ENCODE measurements at regions of chr12 and their contacts with region 1.

Region 1: GRCh38 chr12:120200364-120200800 is 529 bp downstream of the RPLP0 start:
- DNase-seq: peak in 1 of 5 donors; percentile 19
- H3K4me3 ChIP-seq: peak overlapping the region; percentile 80 to 91
- H3K4me3 Mint-ChIP-seq: peak overlapping the region; percentile 93 to 99 (median 98)
- H3K27ac ChIP-seq: peak overlapping the region; percentile 84
- H3K27ac Mint-ChIP-seq: peak overlapping the region; percentile 93 to 99 (median 98)
- H3K4me1 ChIP-seq: peaks cover 42% of the 10 kb centered on the region
- H3K4me1 Mint-ChIP-seq: peaks cover 23 to 60% (median 36%) of the 10 kb centered on the region in 4 donors
- H3K27me3 ChIP-seq: no peaks in the 10 kb centered on the region
- H3K27me3 Mint-ChIP-seq: no peaks in the 10 kb centered on the region

Region 2: DNA sequence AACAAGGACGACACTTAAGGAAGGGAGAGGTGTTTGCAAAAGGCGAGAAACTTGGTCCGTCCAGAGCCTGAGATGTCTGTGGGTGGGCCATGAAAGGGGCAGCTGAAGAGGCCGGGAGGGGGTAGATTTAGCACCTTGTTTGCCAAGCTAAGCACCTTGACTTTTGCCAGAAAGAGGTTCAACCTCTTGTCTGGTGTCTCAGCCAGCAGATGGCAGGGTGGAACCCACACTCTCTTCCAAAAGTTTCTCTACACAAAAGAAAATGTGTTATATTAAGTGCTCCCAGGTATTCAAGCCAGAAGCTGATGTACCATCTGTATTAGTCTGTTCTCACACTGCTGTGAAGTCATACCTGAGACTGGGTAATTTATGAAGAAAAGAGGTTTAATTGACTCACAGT is 1754.1 kb before region 1 on chr12:
- CTCF ChIA-PET with region 1: no interaction called
- POLR2A ChIA-PET with region 1: no interaction called
- intact Hi-C with region 1: no loop called
- DNase-seq: no peak
- H3K4me3 ChIP-seq: no peak overlapping the region
- H3K4me3 Mint-ChIP-seq: no peak overlapping the region
- H3K27ac ChIP-seq: no peak overlapping the region
- H3K27ac Mint-ChIP-seq: no peak overlapping the region
- H3K4me1 ChIP-seq: no peaks in the 10 kb centered on the region
- H3K4me1 Mint-ChIP-seq: no peaks in the 10 kb centered on the region
- H3K27me3 ChIP-seq: no peaks in the 10 kb centered on the region
- H3K27me3 Mint-ChIP-seq: peaks cover 18 to 20% of the 10 kb centered on the region in 2 donors

Region 3: GRCh38 chr12:120220838-120221575 is 20.6 kb after region 1 on chr12:
- CTCF ChIA-PET with region 1: interaction called, 82 read pairs
- POLR2A ChIA-PET with region 1: interaction called, 114 read pairs
- intact Hi-C with region 1: no loop called
- DNase-seq: no peak
- H3K4me3 ChIP-seq: no peak overlapping the region
- H3K4me3 Mint-ChIP-seq: no peak overlapping the region
- H3K27ac ChIP-seq: no peak overlapping the region
- H3K27ac Mint-ChIP-seq: peak overlapping the region in 2 of 7 donors; percentile 36 to 52
- H3K4me1 ChIP-seq: peaks cover 12% of the 10 kb centered on the region
- H3K4me1 Mint-ChIP-seq: peaks cover 8 to 14% (median 10%) of the 10 kb centered on the region in 4 donors
- H3K27me3 ChIP-seq: no peaks in the 10 kb centered on the region
- H3K27me3 Mint-ChIP-seq: no peaks in the 10 kb centered on the region

Region 4: DNA sequence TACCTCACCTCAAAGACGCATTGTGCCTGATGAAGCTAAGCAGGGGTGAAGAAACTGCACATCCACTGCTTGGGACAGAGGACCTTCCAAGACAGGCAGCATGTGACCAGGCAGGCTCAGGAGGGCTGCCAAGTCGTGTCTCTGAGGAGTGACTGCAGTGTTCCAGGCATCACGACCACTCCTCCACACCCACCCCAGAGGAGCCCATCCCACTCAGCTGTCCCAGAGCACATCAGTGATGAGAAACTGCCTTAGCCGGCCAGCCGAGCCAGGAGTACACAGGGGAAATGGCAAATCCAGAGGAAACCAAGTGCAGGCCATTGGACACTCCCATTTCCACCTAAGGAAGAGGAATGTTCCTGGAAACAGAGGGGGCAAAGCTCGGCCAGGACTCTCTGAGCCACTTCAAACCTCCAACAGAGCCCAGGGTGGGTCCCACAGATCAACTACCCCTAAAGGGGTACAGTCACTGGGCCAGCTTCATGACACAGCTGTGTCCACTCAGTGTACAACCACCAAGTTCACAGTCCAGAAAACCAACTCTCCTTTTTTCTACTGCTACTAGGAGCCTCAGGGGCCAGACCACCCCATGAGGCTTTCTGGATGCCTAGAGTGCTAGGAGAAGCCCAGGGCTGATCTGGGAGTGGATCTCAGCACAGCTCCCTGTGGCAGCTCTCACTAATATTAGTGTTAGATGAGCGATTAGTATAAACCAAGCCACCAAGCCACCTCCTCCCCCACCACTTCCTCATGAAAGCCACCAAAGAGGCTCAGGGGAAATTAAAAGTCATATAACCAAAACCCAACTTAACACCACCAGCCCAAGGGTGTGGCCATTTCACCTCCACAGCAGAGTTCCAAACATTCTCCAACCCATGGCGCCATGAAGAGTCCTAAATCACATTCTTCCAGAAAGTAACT is 49.8 kb after region 1 on chr12:
- CTCF ChIA-PET with region 1: interaction called, 11 read pairs
- POLR2A ChIA-PET with region 1: interaction called, 94 read pairs
- intact Hi-C with region 1: loop called (anchors 1 kb)
- DNase-seq: peak; percentile 52 to 61 (median 59)
- H3K4me3 ChIP-seq: peak overlapping the region; percentile 4 to 49
- H3K4me3 Mint-ChIP-seq: peak overlapping the region; percentile 65 to 91 (median 82)
- H3K27ac ChIP-seq: peak overlapping the region; percentile 50
- H3K27ac Mint-ChIP-seq: peak overlapping the region; percentile 81 to 99 (median 95)
- H3K4me1 ChIP-seq: peaks cover 90% of the 10 kb centered on the region
- H3K4me1 Mint-ChIP-seq: peaks cover 67 to 88% (median 78%) of the 10 kb centered on the region in 4 donors
- H3K27me3 ChIP-seq: no peaks in the 10 kb centered on the region
- H3K27me3 Mint-ChIP-seq: no peaks in the 10 kb centered on the region

Region 5: GRCh38 chr12:120489018-120489417 is 288.6 kb after region 1 on chr12:
- CTCF ChIA-PET with region 1: no interaction called
- POLR2A ChIA-PET with region 1: no interaction called
- intact Hi-C with region 1: no loop called
- DNase-seq: no peak
- H3K4me3 ChIP-seq: no peak overlapping the region
- H3K4me3 Mint-ChIP-seq: no peak overlapping the region
- H3K27ac ChIP-seq: no peak overlapping the region
- H3K27ac Mint-ChIP-seq: peak overlapping the region in 1 of 7 donors; percentile 18
- H3K4me1 ChIP-seq: no peaks in the 10 kb centered on the region
- H3K4me1 Mint-ChIP-seq: no peaks in the 10 kb centered on the region
- H3K27me3 ChIP-seq: no peaks in the 10 kb centered on the region
- H3K27me3 Mint-ChIP-seq: no peaks in the 10 kb centered on the region

Measured in CD4-positive, alpha-beta memory T cell (primary cell).